Heart right ventricle (tissue), 16 donors: ENCODE measurements at regions of chr4 and their contacts with region 1.

Region 1: DNA sequence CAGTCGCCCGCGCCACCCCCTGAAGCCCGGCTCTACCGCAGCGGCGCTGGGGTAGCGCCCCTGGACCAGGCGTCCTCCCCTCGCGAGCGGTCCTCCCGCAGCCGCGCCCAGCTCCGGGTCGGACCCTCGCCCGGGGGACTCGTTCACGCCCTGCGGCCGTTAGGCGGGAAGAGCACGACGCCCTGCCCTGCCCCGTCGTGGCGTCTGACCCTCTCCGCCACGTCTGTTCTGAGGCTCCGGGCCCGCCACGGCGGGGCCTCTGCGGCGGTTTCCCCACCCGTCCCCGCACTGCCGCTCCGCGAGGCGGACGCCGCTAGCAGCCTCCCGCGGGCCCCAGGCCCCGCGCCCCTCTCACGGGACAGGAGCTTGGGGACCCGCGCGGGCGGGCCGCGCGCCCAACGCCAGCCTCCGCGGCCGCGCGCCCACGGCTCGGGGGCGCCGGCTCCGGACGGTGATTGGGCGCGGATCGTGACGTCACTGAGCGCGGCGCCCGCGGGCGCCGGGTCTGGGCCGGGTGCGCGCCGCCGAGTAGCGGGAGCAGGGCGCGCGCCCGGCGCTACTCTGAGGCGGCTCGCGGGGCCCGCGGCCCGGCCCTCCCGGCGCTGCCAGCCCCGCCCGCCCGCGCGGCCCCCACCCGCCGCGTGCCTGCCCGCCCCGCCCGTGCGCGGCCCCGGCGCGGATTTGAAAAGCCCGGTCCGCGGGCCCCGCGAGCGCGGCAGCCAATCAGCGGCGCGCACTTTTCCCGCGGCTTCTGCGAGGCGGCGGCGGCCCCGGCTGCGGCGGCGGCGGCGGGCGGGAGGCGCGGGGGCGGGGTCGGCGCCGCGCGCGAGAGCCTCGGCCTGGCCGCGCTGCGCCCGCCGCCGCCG is at the start of gene NSD2:
- DNase-seq: peak; percentile 89 to 92
- ATAC-seq: peak; percentile 78 to 94 (median 90)
- H3K4me3 ChIP-seq: peak within 1 kb of the TSS; percentile 72 to 98 (median 84)
- H3K27ac ChIP-seq: peak within 1 kb of the TSS; percentile 91 to 100 (median 99)
- H3K4me1 ChIP-seq: peaks cover 0 to 29% (median 21%) of the 10 kb centered on the region in 9 donors
- H3K27me3 ChIP-seq: peaks cover 0 to 15% (median 6%) of the 10 kb centered on the region in 7 donors
- CTCF ChIP-seq: no peak
- total RNA-seq, gene NSD2: 32.3 to 64.4 (median 46.0) TPM

Region 2: DNA sequence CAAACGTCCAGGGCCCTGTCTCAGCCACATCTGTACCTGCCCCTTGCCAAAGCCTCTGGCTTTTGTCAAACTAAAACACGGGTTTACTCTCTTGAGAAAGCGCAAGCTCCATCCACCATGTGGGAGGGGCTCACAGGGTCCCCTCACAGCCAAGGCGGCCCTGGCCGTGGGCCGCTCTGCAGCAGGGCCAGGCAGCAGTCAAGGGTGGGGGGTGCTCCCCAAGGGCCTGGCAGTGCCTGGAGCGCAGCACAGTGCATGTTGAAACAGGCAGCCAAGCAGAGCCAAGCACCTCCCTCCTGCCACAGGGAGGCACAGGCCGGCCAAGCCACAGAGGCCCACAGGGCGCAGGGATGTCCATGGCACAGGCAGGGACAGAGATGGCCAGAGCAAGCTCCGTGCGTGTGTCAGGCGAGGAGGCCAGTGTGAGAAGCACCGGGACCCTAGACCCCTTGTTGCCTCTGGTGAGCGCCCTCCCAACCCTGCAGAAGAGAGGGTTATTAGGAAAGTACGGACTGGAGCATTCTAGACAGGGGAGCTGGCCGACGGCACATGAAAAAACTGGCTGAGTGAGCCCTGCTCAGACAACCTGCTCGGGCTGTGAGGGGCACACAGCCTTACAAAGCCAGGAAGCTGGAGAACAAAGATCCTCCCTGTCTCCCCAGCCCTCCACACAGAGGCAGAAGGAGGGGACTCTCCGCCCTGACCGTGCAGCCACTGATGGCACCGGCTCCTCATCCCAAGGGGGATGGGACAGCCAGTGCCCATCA is 225.7 kb before region 1 on chr4:
- intact Hi-C with region 1: no loop called
- DNase-seq: peak; percentile 58 to 62
- ATAC-seq: peak; percentile 76 to 96 (median 93)
- H3K4me3 ChIP-seq: no peak overlapping the region
- H3K27ac ChIP-seq: peak overlapping the region in 7 of 10 donors; percentile 19 to 65 (median 46)
- H3K4me1 ChIP-seq: peaks cover 0 to 15% (median 0%) of the 10 kb centered on the region in 9 donors
- H3K27me3 ChIP-seq: no peaks in the 10 kb centered on the region
- CTCF ChIP-seq: no peak

Region 3: DNA sequence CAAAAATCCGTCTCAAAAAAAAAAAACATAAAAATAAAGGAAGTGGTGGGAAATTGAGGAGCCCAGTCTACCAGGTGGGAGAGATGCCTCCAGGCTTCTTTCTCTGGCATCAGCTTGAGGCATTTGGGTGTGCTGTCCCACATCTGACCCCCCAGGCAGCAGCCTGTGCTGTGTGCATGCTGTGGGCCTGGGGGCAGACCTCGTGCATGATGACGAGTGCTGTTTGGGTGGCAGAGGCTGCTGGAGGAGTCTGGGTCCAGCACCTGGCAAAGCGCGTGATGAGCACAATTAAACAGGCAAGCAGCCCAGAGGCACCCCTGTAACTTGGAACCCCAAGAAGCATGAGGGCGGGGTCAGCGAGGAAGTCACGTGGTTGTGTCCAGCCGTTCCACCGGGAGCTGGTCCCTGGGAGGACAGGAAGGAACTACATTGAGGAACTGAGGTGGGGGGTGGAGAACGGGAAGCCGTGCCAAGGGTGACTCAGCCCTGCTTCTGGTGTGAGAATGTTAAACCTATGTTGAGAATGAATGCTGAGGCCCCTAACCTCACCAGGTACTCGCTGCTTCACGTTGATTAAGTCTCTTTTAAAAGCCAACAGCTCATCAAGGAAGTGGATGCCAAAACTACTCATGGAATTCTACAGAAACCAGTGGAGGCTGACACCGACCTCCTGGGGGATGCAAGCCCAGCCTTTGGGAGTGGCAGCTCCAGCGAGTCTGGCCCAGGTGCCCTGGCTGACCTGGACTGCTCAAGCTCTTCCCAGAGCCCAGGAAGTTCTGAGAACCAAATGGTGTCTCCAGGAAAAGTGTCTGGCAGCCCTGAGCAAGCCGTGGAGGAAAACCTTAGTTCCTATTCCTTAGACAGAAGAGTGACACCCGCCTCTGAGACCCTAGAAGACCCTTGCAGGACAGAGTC is 143.4 kb before region 1 on chr4:
- intact Hi-C with region 1: no loop called
- DNase-seq: peak; percentile 77 to 83
- ATAC-seq: peak; percentile 31 to 93 (median 80)
- H3K4me3 ChIP-seq: peak overlapping the region in 9 of 10 donors; percentile 17 to 50 (median 39)
- H3K27ac ChIP-seq: peak overlapping the region; percentile 41 to 87 (median 80)
- H3K4me1 ChIP-seq: peaks cover 8 to 74% (median 35%) of the 10 kb centered on the region in 9 donors
- H3K27me3 ChIP-seq: no peaks in the 10 kb centered on the region
- CTCF ChIP-seq: no peak

Region 4: GRCh38 chr4:1856042-1856788 is 14.6 kb before region 1 on chr4 and contains the start of gene LETM1:
- intact Hi-C with region 1: loop called in 3 of 10 experiments (anchors 1 to 2 kb)
- DNase-seq: peak; percentile 95 to 96
- ATAC-seq: peak; percentile 96 to 98 (median 97)
- H3K4me3 ChIP-seq: peak within 1 kb of the TSS; percentile 68 to 95 (median 82)
- H3K27ac ChIP-seq: peak within 1 kb of the TSS; percentile 78 to 93 (median 86)
- H3K4me1 ChIP-seq: peaks cover 8 to 55% (median 43%) of the 10 kb centered on the region in 9 donors
- H3K27me3 ChIP-seq: no peaks in the 10 kb centered on the region
- CTCF ChIP-seq: peak in 1 of 9 donors; percentile 10
- total RNA-seq, gene LETM1: 35.3 to 53.1 (median 42.6) TPM